CD4-positive, alpha-beta memory T cell (primary cell): ENCODE measurements at regions of chr14 and their contacts with region 1.

Region 1: GRCh38 chr14:90383075-90383730 is 13.6 kb upstream of the CALM1 start:
- DNase-seq: peak; percentile 96 to 98 (median 97)
- H3K4me3 ChIP-seq: peak overlapping the region; percentile 86 to 95
- H3K4me3 Mint-ChIP-seq: no peak overlapping the region
- H3K27ac ChIP-seq: peak overlapping the region; percentile 93
- H3K27ac Mint-ChIP-seq: no peak overlapping the region
- H3K4me1 ChIP-seq: peaks cover 31% of the 10 kb centered on the region
- H3K4me1 Mint-ChIP-seq: peaks cover 4 to 18% (median 9%) of the 10 kb centered on the region in 4 donors
- H3K27me3 ChIP-seq: no peaks in the 10 kb centered on the region
- H3K27me3 Mint-ChIP-seq: no peaks in the 10 kb centered on the region

Region 2: DNA sequence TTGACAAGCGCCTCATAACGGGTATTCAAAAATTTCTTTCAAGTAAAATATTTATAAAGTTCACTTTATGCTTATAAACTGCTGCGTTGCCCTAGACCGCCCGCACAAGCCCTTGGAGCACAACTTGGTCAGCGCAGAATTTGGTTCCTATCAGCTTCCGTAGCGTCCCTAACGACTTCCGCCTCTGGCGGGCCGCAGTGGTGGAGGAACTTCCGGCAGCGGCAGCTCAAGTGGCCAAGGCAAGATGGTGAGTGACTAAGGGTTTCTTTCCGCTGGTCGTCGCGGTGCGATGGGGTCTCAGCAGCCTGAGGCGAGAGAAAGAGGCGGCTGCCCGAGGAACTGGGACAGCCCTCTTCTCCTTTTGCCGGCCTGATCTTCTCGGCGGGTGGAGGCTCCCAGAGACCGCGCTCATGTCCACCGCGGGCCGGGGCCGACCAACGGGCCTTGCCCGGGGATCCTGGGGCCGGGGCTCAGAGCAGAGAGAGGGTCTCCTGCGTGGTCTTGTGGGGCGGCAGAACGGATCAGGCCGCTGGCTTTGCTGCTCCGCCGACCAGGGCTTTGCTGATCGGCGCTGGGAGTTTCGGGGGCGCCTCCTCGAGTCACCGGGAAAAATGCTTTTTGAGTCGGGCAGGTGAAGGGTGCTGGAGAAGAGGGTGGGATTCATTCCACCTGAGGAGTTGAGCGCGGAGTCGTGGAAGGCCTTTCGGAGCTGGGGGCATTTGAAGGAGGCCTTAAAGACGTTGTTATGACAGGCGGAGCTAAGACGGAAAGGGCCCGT is 126.7 kb before region 1 on chr14 and contains the start of gene PSMC1:
- CTCF ChIA-PET with region 1: no interaction called
- POLR2A ChIA-PET with region 1: interaction called, 20 read pairs
- intact Hi-C with region 1: loop called (anchors 1 kb)
- DNase-seq: peak; percentile 83 to 89 (median 85)
- H3K4me3 ChIP-seq: peak within 1 kb of the TSS; percentile 77 to 92
- H3K4me3 Mint-ChIP-seq: peak within 1 kb of the TSS; percentile 97 to 99 (median 98)
- H3K27ac ChIP-seq: peak within 1 kb of the TSS; percentile 82
- H3K27ac Mint-ChIP-seq: peak within 1 kb of the TSS; percentile 94 to 99 (median 97)
- H3K4me1 ChIP-seq: peaks cover 23% of the 10 kb centered on the region
- H3K4me1 Mint-ChIP-seq: peaks cover 23 to 40% (median 32%) of the 10 kb centered on the region in 4 donors
- H3K27me3 ChIP-seq: no peaks in the 10 kb centered on the region
- H3K27me3 Mint-ChIP-seq: peaks cover 3 to 11% of the 10 kb centered on the region in 2 donors
- total RNA-seq, gene PSMC1: 42.1 to 52.5 TPM

Region 3: DNA sequence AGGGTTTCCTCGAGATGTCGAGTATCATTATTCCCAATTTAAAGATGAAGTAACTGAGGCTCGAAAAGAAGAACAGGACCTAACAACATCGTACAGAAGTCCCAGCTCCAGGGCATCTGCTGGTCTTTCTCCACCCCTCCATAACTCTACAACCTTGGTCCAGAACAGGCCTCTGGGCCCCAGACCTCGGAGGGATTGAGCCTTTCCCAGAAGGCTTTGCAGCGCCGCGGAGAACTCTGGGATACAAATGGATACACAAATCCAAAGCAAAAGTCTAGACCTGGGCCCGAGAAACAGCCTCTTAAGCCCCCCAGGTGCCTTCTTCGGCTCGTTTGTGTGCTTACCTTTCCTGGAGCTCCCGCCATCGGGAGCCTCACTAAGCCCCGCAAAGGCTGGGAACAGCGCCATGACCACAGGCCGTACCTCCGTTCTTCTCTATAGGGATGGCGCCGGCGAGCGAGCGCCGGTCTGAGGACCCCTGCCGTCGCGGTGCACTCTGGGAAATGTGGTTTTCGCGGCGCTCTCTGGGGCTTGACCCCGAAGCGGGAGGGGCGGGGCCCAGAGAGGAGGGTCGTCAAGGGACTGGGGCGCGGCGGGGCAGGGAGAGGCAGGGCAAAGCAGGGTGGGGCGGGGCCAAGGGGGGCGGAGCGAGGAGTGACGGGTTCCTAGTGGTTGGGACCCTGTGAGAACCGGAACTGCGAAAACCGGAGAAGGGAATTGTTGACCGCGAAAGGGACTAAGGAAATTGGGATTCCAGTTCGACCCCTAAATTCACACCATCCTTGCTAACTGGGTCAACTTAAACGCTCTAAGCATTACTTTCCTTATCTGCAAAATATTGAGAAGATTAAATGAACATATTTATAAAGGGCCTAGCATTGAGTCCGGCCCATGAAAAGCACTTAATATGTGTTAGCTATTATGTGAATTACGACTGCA is 51.4 kb before region 1 on chr14 and contains the start of gene NRDE2:
- CTCF ChIA-PET with region 1: interaction called, 3 read pairs
- POLR2A ChIA-PET with region 1: interaction called, 46 read pairs
- intact Hi-C with region 1: loop called (anchors 1 kb)
- DNase-seq: peak; percentile 85 to 87 (median 86)
- H3K4me3 ChIP-seq: peak within 1 kb of the TSS; percentile 63 to 92
- H3K4me3 Mint-ChIP-seq: peak within 1 kb of the TSS; percentile 90 to 96 (median 93)
- H3K27ac ChIP-seq: peak within 1 kb of the TSS; percentile 70
- H3K27ac Mint-ChIP-seq: peak within 1 kb of the TSS; percentile 91 to 97 (median 96)
- H3K4me1 ChIP-seq: peaks cover 15% of the 10 kb centered on the region
- H3K4me1 Mint-ChIP-seq: peaks cover 14 to 38% (median 31%) of the 10 kb centered on the region in 4 donors
- H3K27me3 ChIP-seq: no peaks in the 10 kb centered on the region
- H3K27me3 Mint-ChIP-seq: peaks cover 7% of the 10 kb centered on the region in 2 donors
- total RNA-seq, gene NRDE2: 26.3 to 32.6 TPM

Region 4: GRCh38 chr14:90368946-90369721 is 14.1 kb before region 1 on chr14:
- CTCF ChIA-PET with region 1: interaction called, 12 read pairs
- POLR2A ChIA-PET with region 1: interaction called, 39 read pairs
- intact Hi-C with region 1: loop called (anchors 1 kb)
- DNase-seq: peak in 4 of 5 donors; percentile 43 to 51 (median 44)
- H3K4me3 ChIP-seq: no peak overlapping the region
- H3K4me3 Mint-ChIP-seq: no peak overlapping the region
- H3K27ac ChIP-seq: no peak overlapping the region
- H3K27ac Mint-ChIP-seq: no peak overlapping the region
- H3K4me1 ChIP-seq: no peaks in the 10 kb centered on the region
- H3K4me1 Mint-ChIP-seq: peaks cover 0 to 2% (median 1%) of the 10 kb centered on the region in 4 donors
- H3K27me3 ChIP-seq: no peaks in the 10 kb centered on the region
- H3K27me3 Mint-ChIP-seq: no peaks in the 10 kb centered on the region

Region 5: GRCh38 chr14:90399541-90400444 is 16.6 kb after region 1 on chr14:
- CTCF ChIA-PET with region 1: interaction called, 119 read pairs
- POLR2A ChIA-PET with region 1: interaction called, 1,009 read pairs
- intact Hi-C with region 1: loop called (anchors 1 kb)
- DNase-seq: peak; percentile 83 to 91 (median 87)
- H3K4me3 ChIP-seq: peak overlapping the region; percentile 71 to 88
- H3K4me3 Mint-ChIP-seq: peak overlapping the region; percentile 95 to 99 (median 98)
- H3K27ac ChIP-seq: peak overlapping the region; percentile 87
- H3K27ac Mint-ChIP-seq: peak overlapping the region; percentile 98 to 99 (median 99)
- H3K4me1 ChIP-seq: peaks cover 59% of the 10 kb centered on the region
- H3K4me1 Mint-ChIP-seq: peaks cover 34 to 70% (median 53%) of the 10 kb centered on the region in 4 donors
- H3K27me3 ChIP-seq: no peaks in the 10 kb centered on the region
- H3K27me3 Mint-ChIP-seq: peaks cover 0 to 5% of the 10 kb centered on the region in 2 donors

Region 6: DNA sequence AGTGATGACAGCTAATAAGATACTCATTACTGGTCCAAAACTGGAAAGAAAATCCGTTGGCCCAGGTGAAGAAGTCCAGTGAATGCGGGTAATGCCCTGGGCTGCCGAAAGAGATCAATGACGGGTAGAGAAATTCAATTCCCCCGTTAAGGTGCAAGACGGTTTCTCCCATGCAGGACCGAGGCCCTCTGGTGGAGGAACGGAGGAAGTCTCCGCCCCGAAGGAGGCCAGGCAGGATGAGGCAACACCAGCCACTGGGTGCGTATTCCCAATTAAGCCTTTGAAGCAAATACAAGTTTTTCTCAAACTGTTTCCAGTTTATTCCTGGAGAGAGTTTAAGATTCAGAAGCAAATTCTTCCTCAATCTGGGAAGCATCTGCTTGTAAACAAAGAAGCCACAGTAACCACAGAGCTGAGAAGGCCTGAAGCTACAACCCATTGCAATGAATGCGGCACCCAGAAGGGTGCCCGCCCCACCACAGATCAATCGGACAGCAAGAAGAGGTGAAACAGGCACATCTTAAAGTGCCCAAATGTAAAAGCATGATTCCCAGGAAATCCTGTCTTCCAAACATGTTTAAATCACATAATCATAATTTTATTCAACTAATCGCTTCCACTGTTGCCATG is 314.5 kb after region 1 on chr14:
- CTCF ChIA-PET with region 1: no interaction called
- POLR2A ChIA-PET with region 1: interaction called, 16 read pairs
- intact Hi-C with region 1: no loop called
- DNase-seq: peak; percentile 63 to 71 (median 71)
- H3K4me3 ChIP-seq: no peak overlapping the region
- H3K4me3 Mint-ChIP-seq: peak overlapping the region in 1 of 8 donors; percentile 52
- H3K27ac ChIP-seq: no peak overlapping the region
- H3K27ac Mint-ChIP-seq: no peak overlapping the region
- H3K4me1 ChIP-seq: no peaks in the 10 kb centered on the region
- H3K4me1 Mint-ChIP-seq: peaks cover 0 to 2% (median 0%) of the 10 kb centered on the region in 4 donors
- H3K27me3 ChIP-seq: no peaks in the 10 kb centered on the region
- H3K27me3 Mint-ChIP-seq: peaks cover 0 to 1% of the 10 kb centered on the region in 2 donors

Region 7: GRCh38 chr14:91510174-91511042 is 1127.2 kb after region 1 on chr14 and contains the start of gene PPP4R3A:
- CTCF ChIA-PET with region 1: no interaction called
- POLR2A ChIA-PET with region 1: interaction called, 5 read pairs
- intact Hi-C with region 1: loop called (anchors 5 kb)
- DNase-seq: peak; percentile 93 to 95 (median 95)
- H3K4me3 ChIP-seq: peak within 1 kb of the TSS; percentile 59 to 88
- H3K4me3 Mint-ChIP-seq: peak within 1 kb of the TSS; percentile 97 to 100 (median 100)
- H3K27ac ChIP-seq: peak within 1 kb of the TSS; percentile 99
- H3K27ac Mint-ChIP-seq: peak within 1 kb of the TSS; percentile 99 to 100 (median 100)
- H3K4me1 ChIP-seq: peaks cover 37% of the 10 kb centered on the region
- H3K4me1 Mint-ChIP-seq: peaks cover 21 to 44% (median 29%) of the 10 kb centered on the region in 4 donors
- H3K27me3 ChIP-seq: no peaks in the 10 kb centered on the region
- H3K27me3 Mint-ChIP-seq: no peaks in the 10 kb centered on the region
- total RNA-seq, gene PPP4R3A: 162 to 169 TPM